Cardiac septum (tissue), 1 donor: ENCODE measurements at regions of chr7 and their contacts with region 1.

Region 1: GRCh38 chr7:22001345-22002004 is 55.8 kb upstream of the CDCA7L start:
- DNase-seq: no peak

Region 2: DNA sequence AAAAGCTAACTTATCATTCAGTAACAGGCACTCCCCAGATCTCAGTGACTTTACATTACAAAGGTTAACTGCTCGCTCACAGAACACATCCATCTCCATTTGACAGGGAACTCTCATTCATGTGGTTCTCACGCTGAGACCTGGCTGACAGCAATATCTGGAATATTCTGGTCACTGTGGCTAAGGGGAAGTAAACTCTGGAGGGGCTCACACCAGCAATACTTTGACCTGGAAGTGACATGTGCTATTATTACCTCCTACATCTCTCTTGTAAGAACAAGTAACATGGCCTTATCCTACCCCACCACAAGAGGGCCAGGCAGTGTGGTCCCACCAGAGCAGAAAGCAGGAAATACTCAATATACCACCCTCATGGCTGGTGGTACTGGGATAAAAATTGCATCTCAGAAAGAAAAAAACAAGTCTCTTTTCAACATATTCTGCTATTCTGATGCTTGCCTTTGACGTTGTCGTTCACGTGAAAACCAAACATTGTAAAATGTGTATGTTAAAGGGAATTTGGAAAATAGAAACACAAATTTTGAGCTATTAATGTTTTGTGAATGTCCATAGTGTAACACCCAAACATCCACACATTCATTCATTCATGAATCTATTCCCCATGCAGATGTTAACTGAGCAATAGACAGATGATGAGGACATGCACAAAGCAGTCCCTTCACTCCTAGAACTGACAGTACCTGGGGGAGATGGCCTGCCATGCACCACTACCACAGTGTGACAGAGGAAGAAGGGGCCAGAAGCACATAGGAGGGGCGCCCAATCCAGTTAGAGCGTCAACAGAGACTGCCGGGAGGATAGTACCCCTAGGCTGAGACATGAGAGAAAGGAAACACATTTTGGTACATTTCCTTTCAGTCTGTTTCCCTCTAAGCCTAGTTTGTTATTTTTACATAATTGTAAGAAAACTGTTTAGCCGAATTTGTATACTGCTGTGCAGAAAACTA is 739.6 kb before region 1 on chr7:
- intact Hi-C with region 1: loop called (anchors 10 kb)
- DNase-seq: no peak

Region 3: GRCh38 chr7:21767300-21767900 is 234.1 kb before region 1 on chr7:
- intact Hi-C with region 1: loop called (anchors 10 kb)
- DNase-seq: no peak

Region 4: DNA sequence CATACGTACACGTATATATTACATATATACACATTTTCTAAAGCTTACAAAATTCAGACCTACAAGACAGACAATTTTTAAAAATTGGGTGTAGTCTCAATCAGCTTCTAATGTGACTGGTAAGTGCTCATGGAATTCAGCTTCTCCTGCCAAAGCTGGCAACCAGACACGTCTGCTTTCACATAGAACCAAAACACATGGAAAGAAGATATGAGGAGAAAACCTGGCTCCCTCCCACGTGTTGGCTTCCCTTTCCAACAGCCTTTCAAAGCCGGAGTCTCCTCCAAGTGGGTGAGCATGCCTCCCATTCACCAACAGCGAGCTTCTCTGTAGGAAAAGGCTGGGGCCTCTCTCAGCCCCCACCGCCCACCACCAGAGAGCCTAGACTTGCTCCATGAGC is 89.2 kb before region 1 on chr7:
- intact Hi-C with region 1: no loop called
- DNase-seq: peak; percentile 78